Lower leg skin (tissue), 4 donors: ENCODE measurements at regions of chr6 and their contacts with region 1.

Region 1: GRCh38 chr6:24283043-24283985 is 74.5 kb downstream of the DCDC2 start:
- DNase-seq: peak; percentile 63 to 91
- H3K4me3 ChIP-seq: no peak overlapping the region
- CTCF ChIP-seq: no peak
- POLR2A ChIP-seq: no peak

Region 2: DNA sequence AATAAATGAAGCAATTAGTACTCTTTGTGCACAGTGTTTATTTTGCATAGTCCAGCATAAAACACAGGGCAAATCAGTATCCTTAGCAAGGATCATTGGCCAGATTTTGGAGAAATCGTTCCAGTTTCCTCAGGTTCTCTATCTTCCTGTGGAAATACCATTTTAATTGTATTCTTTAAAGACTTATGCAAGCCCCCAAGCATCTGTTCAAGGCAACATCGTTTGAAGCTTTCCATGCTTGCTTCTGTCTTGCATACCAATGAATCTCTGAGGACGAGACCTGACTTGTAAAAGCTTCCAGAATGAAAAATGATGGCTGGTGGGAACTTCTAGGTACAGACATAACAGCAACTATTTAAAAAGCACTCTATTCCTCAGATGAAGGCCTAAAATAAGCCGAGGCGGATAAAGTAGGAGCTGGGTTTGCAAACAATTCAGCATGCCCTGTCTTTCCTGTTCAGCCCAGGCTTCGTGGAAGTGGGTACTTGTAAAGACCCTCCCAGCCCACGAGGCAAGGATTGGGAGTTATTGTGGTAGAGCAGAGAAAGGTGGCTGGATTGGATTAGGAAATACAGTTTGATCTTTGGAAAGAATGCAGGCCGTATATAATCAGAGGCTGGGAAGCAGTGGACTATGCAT is 135.7 kb before region 1 on chr6:
- intact Hi-C with region 1: no loop called
- DNase-seq: no peak
- H3K4me3 ChIP-seq: no peak overlapping the region
- CTCF ChIP-seq: no peak
- POLR2A ChIP-seq: no peak

Region 3: DNA sequence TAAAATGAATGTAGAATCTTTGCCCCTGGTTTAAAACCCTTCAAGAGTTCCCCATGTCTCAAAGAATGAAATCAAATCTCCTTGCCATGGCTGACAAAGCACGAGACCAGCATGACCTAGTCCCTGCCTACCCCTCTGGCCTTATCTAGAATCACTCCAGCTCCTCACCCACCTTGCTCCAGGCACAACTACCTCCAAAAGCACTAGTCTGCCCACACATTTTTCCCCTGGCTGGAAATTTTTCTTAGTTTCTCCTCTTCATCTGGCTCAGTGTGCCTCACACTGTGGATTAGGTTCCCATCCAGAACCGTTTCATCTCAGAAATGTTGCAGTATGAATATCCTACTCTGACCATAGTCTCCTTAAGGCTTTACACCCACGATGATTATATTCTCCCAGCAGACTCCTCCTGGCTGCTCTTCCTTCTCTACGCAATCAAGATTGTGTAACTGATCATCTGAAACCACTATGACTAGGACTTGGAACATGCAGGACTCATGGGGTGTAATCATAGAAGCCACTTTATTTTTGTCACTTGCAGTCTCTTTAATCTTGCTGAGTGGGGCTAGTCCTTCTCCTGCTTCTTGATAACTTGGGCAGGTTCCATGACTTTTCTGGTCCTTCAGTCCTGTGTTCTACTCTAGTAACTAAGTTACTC is 111.6 kb after region 1 on chr6:
- intact Hi-C with region 1: loop called (anchors 10 kb)
- DNase-seq: no peak
- H3K4me3 ChIP-seq: no peak overlapping the region
- CTCF ChIP-seq: no peak
- POLR2A ChIP-seq: no peak